OCI-LY7 (cell line): ENCODE measurements at regions of chr11 and their contacts with region 1.

Region 1: DNA sequence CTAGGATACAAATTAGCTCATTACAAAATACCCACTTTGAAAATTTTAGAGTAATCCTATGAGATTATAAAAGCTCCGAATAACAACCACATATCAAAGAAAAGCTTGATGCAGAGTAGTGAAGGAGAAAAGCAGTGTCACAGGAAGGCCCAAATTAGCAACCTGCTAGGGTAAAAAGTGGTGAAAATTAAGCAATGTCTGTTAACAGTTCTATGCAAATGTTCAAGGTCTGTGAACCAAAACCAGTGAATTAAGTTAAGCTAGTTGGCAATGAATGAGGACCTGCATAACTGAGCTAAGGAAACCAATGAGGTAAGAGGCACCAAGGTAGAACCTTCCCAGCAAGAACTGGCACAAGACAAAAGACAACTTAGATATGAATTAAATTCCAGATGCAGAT is 29.6 kb downstream of the PRDM10 start:
- DNase-seq: peak; percentile 94
- H3K4me3 ChIP-seq: peak overlapping the region; percentile 60
- H3K27ac ChIP-seq: peak overlapping the region; percentile 98
- H3K4me1 ChIP-seq: peaks cover 88% of the 10 kb centered on the region
- CTCF ChIP-seq: no peak

Region 2: DNA sequence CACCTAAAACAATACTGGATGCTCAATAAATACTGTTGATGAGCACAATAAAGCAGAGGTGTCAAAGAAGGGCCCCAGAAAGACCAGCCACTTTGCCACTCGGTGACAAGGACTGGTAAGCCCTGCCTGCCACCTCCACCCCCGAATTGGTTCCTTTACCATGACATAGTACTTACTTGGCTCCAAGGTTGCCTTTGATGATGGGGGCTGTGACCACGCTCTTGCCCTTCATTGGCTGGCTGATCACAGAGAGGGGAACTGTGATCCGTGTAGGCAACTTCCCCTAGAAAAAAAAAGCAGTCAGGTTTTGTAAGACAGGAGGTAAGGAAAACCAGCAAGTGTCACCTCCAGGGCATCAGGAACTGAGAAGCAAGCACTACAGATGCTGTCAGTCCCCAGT is 107.4 kb before region 1 on chr11:
- CTCF ChIA-PET with region 1: no interaction called
- POLR2A ChIA-PET with region 1: no interaction called
- intact Hi-C with region 1: no loop called
- DNase-seq: no peak
- H3K4me3 ChIP-seq: no peak overlapping the region
- H3K27ac ChIP-seq: no peak overlapping the region
- H3K4me1 ChIP-seq: no peaks in the 10 kb centered on the region
- CTCF ChIP-seq: no peak

Region 3: DNA sequence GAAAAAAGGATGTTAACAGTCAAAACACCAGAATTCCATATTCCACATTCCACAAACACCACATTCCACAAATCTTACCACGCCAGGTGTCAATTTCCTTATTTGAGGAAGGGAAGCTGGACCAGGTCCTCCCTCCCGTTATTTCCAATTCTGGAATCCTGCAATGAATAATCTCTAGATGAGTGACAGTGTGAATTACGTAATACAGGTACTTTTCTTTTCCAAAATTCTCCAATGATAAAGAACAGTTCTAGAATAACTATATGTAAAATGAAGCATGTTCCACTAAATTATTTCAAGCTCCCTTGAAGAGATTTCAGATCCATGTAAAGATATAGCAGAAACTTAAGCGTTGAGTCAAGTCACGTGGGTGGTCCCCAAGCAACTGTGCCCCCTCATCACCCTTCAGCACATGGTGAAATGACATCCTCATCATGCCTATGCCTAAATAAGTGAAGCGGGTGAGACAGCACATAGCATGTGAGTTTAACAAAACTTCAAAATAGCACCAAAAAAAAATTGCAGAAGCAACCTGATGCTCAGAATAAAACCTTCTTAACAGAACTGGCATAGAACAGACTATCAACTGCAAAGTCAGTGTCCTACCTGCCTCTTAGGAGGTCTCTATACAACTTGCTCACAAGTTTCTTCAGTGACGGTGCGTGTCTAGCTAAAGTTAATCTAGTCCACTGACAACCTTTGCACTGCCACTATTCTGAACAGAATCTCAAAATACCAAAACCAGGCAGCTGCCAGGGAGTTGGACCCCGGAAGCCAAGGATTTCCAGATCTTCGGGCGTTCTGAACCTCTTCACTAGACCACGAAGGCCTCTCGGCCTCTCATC is 78.6 kb before region 1 on chr11:
- CTCF ChIA-PET with region 1: no interaction called
- POLR2A ChIA-PET with region 1: no interaction called
- intact Hi-C with region 1: loop called (anchors 1 kb)
- DNase-seq: peak; percentile 51
- H3K4me3 ChIP-seq: peak overlapping the region; percentile 100
- H3K27ac ChIP-seq: peak overlapping the region; percentile 47
- H3K4me1 ChIP-seq: peaks cover 18% of the 10 kb centered on the region
- CTCF ChIP-seq: no peak

Region 4: DNA sequence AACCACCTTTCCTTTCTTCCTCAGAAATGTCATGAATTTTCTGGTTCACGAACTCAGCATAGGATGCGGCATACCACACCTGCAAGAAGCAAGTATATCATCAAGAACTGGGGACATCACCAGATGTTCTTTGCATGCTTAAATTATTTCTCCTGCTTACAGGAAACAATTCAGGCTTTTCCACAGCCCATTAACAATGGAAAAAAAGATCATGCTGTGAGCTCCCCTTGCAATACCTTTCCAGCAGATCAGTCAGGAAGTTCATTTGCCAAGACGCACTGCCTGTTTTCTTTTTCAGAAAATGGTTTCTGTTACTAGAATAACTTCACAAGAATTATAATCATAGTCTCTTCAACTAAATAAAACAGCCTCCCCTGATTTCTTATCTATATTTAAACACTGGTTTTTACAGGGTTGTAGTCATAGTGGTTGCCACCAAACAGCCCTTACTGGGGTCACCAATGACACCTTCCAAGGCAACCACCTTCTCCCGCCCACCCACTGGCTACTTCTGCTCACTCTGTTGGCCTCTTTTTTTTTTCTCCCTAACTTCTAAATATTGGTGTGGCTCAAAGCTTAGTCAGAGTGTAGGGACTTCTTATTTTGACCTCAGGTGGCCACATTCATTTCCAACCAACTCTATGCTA is 35.4 kb before region 1 on chr11:
- CTCF ChIA-PET with region 1: no interaction called
- POLR2A ChIA-PET with region 1: interaction called, 15 read pairs
- intact Hi-C with region 1: no loop called
- DNase-seq: peak; percentile 30
- H3K4me3 ChIP-seq: no peak overlapping the region
- H3K27ac ChIP-seq: peak overlapping the region; percentile 48
- H3K4me1 ChIP-seq: peaks cover 60% of the 10 kb centered on the region
- CTCF ChIP-seq: no peak

Region 5: GRCh38 chr11:129943036-129943435 is 30.0 kb before region 1 on chr11:
- CTCF ChIA-PET with region 1: interaction called, 21 read pairs
- POLR2A ChIA-PET with region 1: interaction called, 86 read pairs
- intact Hi-C with region 1: loop called (anchors 2 kb)
- DNase-seq: no peak
- H3K4me3 ChIP-seq: peak overlapping the region; percentile 44
- H3K27ac ChIP-seq: peak overlapping the region; percentile 15
- H3K4me1 ChIP-seq: peaks cover 77% of the 10 kb centered on the region
- CTCF ChIP-seq: no peak

Region 6: DNA sequence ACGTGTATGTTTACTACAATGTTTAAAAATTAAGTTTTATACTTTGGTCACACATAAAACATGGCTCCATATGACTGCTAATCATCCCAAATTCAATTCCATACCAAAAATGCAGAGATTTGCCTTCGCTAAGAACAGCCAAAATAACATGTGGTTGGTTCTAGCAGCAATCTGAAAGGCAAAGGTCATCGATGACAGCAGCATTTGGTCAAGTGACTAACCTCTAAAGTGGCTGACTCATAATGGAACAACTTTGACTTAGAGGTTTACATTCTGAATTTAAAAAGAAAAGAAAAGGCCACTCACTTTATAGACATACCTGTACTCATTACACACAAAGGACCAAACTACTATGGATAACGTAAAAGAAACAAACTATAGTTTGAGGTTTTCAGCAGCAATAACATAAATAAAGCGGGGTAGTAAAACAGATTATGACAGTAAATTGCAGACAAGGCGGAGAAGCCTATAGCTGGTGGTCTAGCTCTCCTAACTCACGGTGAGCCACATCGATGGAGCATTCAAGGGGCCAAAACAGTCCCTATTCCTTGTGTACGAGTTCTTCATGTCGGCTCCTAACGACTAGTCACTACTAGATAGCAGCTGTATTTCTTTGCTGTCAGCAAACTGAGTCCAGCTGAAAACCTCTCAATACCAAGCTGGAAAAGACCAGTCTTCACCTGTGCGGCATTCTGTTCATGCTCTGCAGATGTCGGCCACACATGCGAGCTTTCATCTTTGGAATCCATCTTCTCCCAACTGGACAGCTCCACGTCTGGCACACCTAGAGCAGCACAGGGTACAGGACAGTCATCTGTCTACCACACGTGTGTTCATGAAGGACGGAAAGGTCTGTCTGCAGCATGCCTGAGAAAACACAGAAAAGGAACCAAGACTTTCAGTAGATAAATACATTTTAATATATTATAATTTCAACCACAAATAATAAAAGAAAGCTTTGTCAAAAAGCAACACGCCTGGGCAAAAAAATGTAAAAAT is 12.6 kb before region 1 on chr11:
- CTCF ChIA-PET with region 1: interaction called, 5 read pairs
- POLR2A ChIA-PET with region 1: interaction called, 80 read pairs
- intact Hi-C with region 1: no loop called
- DNase-seq: peak; percentile 47
- H3K4me3 ChIP-seq: peak overlapping the region; percentile 53
- H3K27ac ChIP-seq: peak overlapping the region; percentile 59
- H3K4me1 ChIP-seq: peaks cover 81% of the 10 kb centered on the region
- CTCF ChIP-seq: no peak

Region 7: DNA sequence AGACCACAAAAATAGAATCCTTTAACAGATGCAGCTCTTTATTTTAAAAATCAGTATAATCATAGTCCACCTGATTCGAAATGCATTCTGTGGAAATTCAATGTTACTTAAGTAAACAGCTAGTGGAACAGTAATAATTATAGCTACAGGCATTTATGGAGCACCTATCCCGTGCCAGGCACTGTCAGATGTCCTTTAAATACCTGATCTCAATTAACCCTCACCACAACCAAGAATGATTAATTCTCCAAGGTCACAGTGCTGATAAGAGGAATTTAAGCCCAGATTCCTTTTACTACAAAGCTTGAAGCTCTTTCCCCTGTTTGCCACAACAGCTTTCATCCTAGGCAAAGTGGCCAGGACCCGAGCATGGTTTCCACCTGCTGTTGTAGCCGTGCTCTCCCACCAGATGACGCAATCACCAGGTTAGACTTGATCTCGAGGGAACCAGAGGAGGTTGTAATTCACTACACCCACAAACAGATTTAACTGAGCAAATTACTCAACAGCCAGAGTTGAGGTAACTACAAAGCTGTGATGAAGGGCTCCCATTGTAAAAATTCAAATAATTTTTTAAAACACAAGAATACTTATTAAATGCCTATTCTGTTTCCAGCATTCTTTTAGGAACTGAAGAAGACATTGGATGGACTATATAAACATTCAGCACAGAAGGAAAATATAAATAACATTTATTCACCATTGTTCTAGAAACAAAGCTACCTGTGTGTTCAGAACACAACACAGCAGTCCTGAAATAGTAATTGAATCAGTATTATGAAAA is 19.3 kb after region 1 on chr11:
- CTCF ChIA-PET with region 1: interaction called, 7 read pairs
- POLR2A ChIA-PET with region 1: interaction called, 228 read pairs
- intact Hi-C with region 1: no loop called
- DNase-seq: peak; percentile 91
- H3K4me3 ChIP-seq: no peak overlapping the region
- H3K27ac ChIP-seq: peak overlapping the region; percentile 45
- H3K4me1 ChIP-seq: peaks cover 56% of the 10 kb centered on the region
- CTCF ChIP-seq: peak; percentile 92

Region 8: DNA sequence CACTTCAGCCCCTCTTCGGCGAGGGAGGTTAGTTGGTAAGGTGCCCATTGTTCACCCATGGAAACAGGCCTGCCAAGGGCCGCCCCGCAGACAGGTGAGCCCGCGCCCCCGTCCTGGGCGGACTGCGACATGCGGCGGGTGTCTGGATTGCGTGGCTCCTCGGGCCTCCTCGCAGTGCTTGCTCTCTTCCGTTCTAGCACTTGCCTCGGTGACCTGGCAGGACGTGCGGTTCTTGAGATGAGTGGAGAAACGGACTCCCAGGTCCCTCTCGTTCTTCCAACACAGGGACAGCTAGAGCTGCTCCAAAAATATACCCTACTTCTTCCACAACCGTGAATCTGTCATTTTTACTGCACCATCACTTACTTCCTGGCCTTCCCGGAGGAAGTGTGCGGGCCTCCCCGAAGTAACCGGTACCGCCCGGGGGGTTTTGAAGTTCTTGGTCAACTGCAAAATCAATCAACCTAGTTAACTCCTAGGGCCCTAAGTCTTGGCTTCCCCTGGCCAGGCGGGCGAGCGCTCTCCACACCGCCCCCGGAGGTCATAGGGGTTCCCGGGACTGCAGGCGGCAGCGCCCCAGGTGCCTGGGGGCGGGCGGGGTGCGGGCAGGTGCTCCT is 342.4 kb after region 1 on chr11:
- CTCF ChIA-PET with region 1: no interaction called
- POLR2A ChIA-PET with region 1: no interaction called
- intact Hi-C with region 1: no loop called
- DNase-seq: peak; percentile 67
- H3K4me3 ChIP-seq: peak overlapping the region; percentile 73
- H3K27ac ChIP-seq: peak overlapping the region; percentile 78
- H3K4me1 ChIP-seq: peaks cover 37% of the 10 kb centered on the region
- CTCF ChIP-seq: peak; percentile 73